ENCODE measurements at regions of chr1 and their contacts with region 1.

Region 1: DNA sequence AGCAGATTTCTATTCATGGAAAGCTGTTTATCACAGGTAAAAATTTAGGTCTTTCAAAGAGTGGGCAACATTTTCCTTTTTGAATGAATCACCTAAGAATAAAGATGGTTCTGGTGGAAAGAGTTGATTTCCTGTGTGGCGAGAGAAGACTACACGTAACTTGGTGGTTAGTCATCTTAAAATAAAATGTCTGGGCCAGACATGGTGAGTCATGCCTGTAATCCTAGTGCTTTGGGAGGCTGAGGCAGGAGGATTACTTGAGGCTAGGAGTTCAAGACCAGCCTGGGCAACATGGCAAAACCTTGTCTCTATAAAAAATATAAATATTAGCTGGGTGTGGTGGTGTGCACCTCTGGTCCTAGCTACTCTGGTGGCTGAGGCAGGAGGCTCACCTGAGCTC is 65.7 kb downstream of the DISP1 start:
- DNase-seq: peak; percentile 55
- ATAC-seq: peak; percentile 92
- H3K4me3 Mint-ChIP-seq: no peak overlapping the region
- H3K27ac Mint-ChIP-seq: peak overlapping the region; percentile 37
- H3K4me1 Mint-ChIP-seq: peaks cover 19% of the 10 kb centered on the region
- H3K27me3 Mint-ChIP-seq: no peaks in the 10 kb centered on the region

Region 2: GRCh38 chr1:222814536-222815439 is 65.8 kb before region 1 on chr1 and contains the start of gene DISP1:
- CTCF ChIA-PET with region 1: no interaction called
- POLR2A ChIA-PET with region 1: no interaction called
- intact Hi-C with region 1: loop called (anchors 2 kb)
- DNase-seq: peak; percentile 88
- ATAC-seq: peak; percentile 88
- H3K4me3 Mint-ChIP-seq: peak within 1 kb of the TSS; percentile 90
- H3K27ac Mint-ChIP-seq: peak within 1 kb of the TSS; percentile 91
- H3K4me1 Mint-ChIP-seq: peaks cover 25% of the 10 kb centered on the region
- H3K27me3 Mint-ChIP-seq: no peaks in the 10 kb centered on the region
- total RNA-seq, gene DISP1: 0.98 to 1.9 TPM

Region 3: GRCh38 chr1:222897527-222898190 is 17.1 kb after region 1 on chr1:
- CTCF ChIA-PET with region 1: interaction called, 3 read pairs
- POLR2A ChIA-PET with region 1: no interaction called
- intact Hi-C with region 1: loop called (anchors 1 kb)
- DNase-seq: no peak
- ATAC-seq: no peak
- H3K4me3 Mint-ChIP-seq: peak overlapping the region; percentile 14
- H3K27ac Mint-ChIP-seq: peak overlapping the region; percentile 59
- H3K4me1 Mint-ChIP-seq: peaks cover 17% of the 10 kb centered on the region
- H3K27me3 Mint-ChIP-seq: no peaks in the 10 kb centered on the region

Region 4: GRCh38 chr1:222909586-222909985 is 29.0 kb after region 1 on chr1:
- CTCF ChIA-PET with region 1: no interaction called
- POLR2A ChIA-PET with region 1: no interaction called
- intact Hi-C with region 1: no loop called
- DNase-seq: no peak
- ATAC-seq: no peak
- H3K4me3 Mint-ChIP-seq: no peak overlapping the region
- H3K27ac Mint-ChIP-seq: no peak overlapping the region
- H3K4me1 Mint-ChIP-seq: no peaks in the 10 kb centered on the region
- H3K27me3 Mint-ChIP-seq: no peaks in the 10 kb centered on the region

Region 5: DNA sequence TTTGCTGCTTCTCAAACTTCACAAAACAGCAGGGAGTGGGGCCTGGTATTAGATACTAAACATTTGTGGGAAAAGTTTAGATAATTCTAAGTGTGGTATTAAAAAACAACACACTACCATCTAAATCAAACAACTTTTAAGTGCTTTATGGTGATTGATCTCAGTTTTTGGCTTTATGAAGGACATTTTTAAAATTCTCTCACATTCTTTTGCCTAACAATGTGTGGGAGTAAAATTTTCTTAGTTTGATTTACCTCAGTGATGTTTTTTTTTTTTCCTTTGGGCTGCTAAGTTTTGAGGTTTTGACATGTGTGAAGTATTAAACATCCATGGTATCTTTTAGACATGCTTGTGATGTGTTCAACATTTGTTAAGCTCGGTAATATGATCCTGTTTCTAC is 50.4 kb after region 1 on chr1:
- CTCF ChIA-PET with region 1: no interaction called
- POLR2A ChIA-PET with region 1: no interaction called
- intact Hi-C with region 1: no loop called
- DNase-seq: no peak
- ATAC-seq: no peak
- H3K4me3 Mint-ChIP-seq: no peak overlapping the region
- H3K27ac Mint-ChIP-seq: no peak overlapping the region
- H3K4me1 Mint-ChIP-seq: no peaks in the 10 kb centered on the region
- H3K27me3 Mint-ChIP-seq: no peaks in the 10 kb centered on the region

Measured in activated CD4-positive, alpha-beta T cell treated with anti-CD3 and anti-CD28 coated beads for 36 hours (primary cell).